ENCODE measurements at regions of chr10 and their contacts with region 1.

Region 1: DNA sequence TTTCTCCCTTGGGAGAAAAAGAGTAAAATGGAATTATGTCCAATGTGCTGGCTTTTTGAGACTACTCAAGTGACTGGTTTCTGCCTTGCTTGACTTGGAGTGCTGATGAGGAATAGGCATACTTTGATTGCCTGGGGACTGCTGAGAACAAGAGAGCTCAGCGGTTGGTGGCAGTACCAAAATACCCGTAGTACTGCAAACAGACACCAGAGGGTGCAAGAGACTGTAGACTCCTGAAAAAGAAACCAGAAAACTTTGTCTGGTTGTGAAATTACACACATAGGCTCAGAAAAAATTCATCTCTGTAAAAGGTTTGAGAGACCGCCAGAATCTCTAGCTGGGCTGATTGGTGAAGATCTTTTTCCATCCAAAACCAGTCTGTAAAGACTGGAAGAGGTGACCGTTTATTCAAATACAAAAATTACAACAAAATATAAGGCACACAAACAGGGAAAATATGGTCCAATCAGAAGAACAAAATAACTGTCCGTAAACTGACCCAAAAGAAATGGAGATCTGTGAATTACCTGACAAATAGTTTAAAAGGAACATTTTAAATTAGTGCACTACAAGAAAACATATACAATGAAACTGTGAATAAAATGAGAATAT is 18.5 kb downstream of the BICC1 start:
- DNase-seq: peak; percentile 81
- H3K4me3 Mint-ChIP-seq: no peak overlapping the region
- H3K27ac Mint-ChIP-seq: peak overlapping the region; percentile 87
- H3K4me1 Mint-ChIP-seq: peaks cover 24% of the 10 kb centered on the region
- H3K27me3 Mint-ChIP-seq: no peaks in the 10 kb centered on the region
- CTCF ChIP-seq: peak; percentile 84

Region 2: GRCh38 chr10:58173391-58173790 is 357.8 kb before region 1 on chr10:
- CTCF ChIA-PET with region 1: no interaction called
- POLR2A ChIA-PET with region 1: no interaction called
- intact Hi-C with region 1: no loop called
- DNase-seq: no peak
- H3K4me3 Mint-ChIP-seq: no peak overlapping the region
- H3K27ac Mint-ChIP-seq: no peak overlapping the region
- H3K4me1 Mint-ChIP-seq: no peaks in the 10 kb centered on the region
- H3K27me3 Mint-ChIP-seq: peaks cover 20% of the 10 kb centered on the region
- CTCF ChIP-seq: no peak

Region 3: GRCh38 chr10:58258977-58259692 is 272.1 kb before region 1 on chr10:
- CTCF ChIA-PET with region 1: no interaction called
- POLR2A ChIA-PET with region 1: no interaction called
- intact Hi-C with region 1: no loop called
- DNase-seq: no peak
- H3K4me3 Mint-ChIP-seq: no peak overlapping the region
- H3K27ac Mint-ChIP-seq: no peak overlapping the region
- H3K4me1 Mint-ChIP-seq: no peaks in the 10 kb centered on the region
- H3K27me3 Mint-ChIP-seq: no peaks in the 10 kb centered on the region
- CTCF ChIP-seq: peak; percentile 11

Region 4: GRCh38 chr10:58360391-58361004 is 170.7 kb before region 1 on chr10:
- CTCF ChIA-PET with region 1: no interaction called
- POLR2A ChIA-PET with region 1: no interaction called
- intact Hi-C with region 1: no loop called
- DNase-seq: peak; percentile 63
- H3K4me3 Mint-ChIP-seq: no peak overlapping the region
- H3K27ac Mint-ChIP-seq: peak overlapping the region; percentile 26
- H3K4me1 Mint-ChIP-seq: peaks cover 13% of the 10 kb centered on the region
- H3K27me3 Mint-ChIP-seq: no peaks in the 10 kb centered on the region
- CTCF ChIP-seq: no peak

Region 5: DNA sequence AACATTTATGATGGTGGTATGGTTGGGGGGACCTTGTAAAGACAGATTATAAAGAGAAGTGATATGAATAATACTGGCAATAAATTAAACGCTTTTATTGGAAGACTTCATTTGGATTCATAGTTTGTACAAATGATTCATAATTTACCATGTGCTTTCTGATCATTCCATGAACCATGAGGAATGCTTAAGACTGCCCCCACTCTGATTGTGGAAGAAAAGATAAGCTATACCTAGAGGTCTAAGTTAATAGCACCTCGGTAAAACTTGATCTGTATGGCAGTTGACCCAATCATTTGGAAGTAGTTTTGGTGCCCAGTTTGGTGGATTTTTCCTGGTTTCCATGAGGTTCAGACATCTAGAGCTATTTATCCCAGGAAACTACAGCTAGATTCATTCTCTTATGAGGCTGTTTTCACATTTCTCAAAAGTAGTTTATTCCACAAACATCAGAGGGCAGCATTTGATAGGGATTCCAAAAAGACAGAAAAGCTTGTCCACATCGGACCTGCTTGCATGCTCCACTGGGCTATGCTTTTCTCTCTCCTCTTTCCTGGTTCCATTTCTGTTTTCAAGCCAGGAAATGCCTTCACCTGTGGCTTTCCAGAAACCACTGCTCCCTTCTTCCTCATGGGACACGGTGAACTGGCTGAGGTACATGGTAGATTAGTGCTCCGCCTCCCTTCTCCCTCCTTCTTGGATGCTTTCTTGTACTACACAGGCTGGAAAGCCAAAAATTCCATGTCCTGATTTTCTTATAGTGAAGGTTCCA is 116.7 kb before region 1 on chr10:
- CTCF ChIA-PET with region 1: interaction called, 85 read pairs
- POLR2A ChIA-PET with region 1: interaction called, 9 read pairs
- intact Hi-C with region 1: loop called (anchors 1 kb)
- DNase-seq: peak; percentile 79
- H3K4me3 Mint-ChIP-seq: no peak overlapping the region
- H3K27ac Mint-ChIP-seq: no peak overlapping the region
- H3K4me1 Mint-ChIP-seq: peaks cover 16% of the 10 kb centered on the region
- H3K27me3 Mint-ChIP-seq: no peaks in the 10 kb centered on the region
- CTCF ChIP-seq: peak; percentile 67

Region 6: GRCh38 chr10:58513188-58514110 is 17.7 kb before region 1 on chr10:
- CTCF ChIA-PET with region 1: interaction called, 19 read pairs
- POLR2A ChIA-PET with region 1: interaction called, 10 read pairs
- intact Hi-C with region 1: no loop called
- DNase-seq: peak; percentile 73
- H3K4me3 Mint-ChIP-seq: peak overlapping the region; percentile 74
- H3K27ac Mint-ChIP-seq: peak overlapping the region; percentile 89
- H3K4me1 Mint-ChIP-seq: peaks cover 27% of the 10 kb centered on the region
- H3K27me3 Mint-ChIP-seq: no peaks in the 10 kb centered on the region
- CTCF ChIP-seq: no peak

Region 7: GRCh38 chr10:58588673-58589265 is 57.6 kb after region 1 on chr10:
- CTCF ChIA-PET with region 1: interaction called, 13 read pairs
- POLR2A ChIA-PET with region 1: no interaction called
- intact Hi-C with region 1: no loop called
- DNase-seq: peak; percentile 60
- H3K4me3 Mint-ChIP-seq: no peak overlapping the region
- H3K27ac Mint-ChIP-seq: peak overlapping the region; percentile 52
- H3K4me1 Mint-ChIP-seq: peaks cover 29% of the 10 kb centered on the region
- H3K27me3 Mint-ChIP-seq: no peaks in the 10 kb centered on the region
- CTCF ChIP-seq: no peak

Region 8: GRCh38 chr10:58608351-58608750 is 77.2 kb after region 1 on chr10:
- CTCF ChIA-PET with region 1: no interaction called
- POLR2A ChIA-PET with region 1: no interaction called
- intact Hi-C with region 1: no loop called
- DNase-seq: no peak
- H3K4me3 Mint-ChIP-seq: no peak overlapping the region
- H3K27ac Mint-ChIP-seq: peak overlapping the region; percentile 28
- H3K4me1 Mint-ChIP-seq: no peaks in the 10 kb centered on the region
- H3K27me3 Mint-ChIP-seq: no peaks in the 10 kb centered on the region
- CTCF ChIP-seq: no peak

Region 9: GRCh38 chr10:58755677-58756076 is 224.5 kb after region 1 on chr10:
- CTCF ChIA-PET with region 1: interaction called, 9 read pairs
- POLR2A ChIA-PET with region 1: no interaction called
- intact Hi-C with region 1: loop called (anchors 5 kb)
- DNase-seq: peak; percentile 83
- H3K4me3 Mint-ChIP-seq: peak overlapping the region; percentile 75
- H3K27ac Mint-ChIP-seq: peak overlapping the region; percentile 90
- H3K4me1 Mint-ChIP-seq: peaks cover 14% of the 10 kb centered on the region
- H3K27me3 Mint-ChIP-seq: no peaks in the 10 kb centered on the region
- CTCF ChIP-seq: no peak

Region 10: GRCh38 chr10:58952747-58953466 is 421.7 kb after region 1 on chr10:
- CTCF ChIA-PET with region 1: interaction called, 16 read pairs
- POLR2A ChIA-PET with region 1: no interaction called
- intact Hi-C with region 1: loop called (anchors 2 kb)
- DNase-seq: peak; percentile 59
- H3K4me3 Mint-ChIP-seq: no peak overlapping the region
- H3K27ac Mint-ChIP-seq: no peak overlapping the region
- H3K4me1 Mint-ChIP-seq: peaks cover 6% of the 10 kb centered on the region
- H3K27me3 Mint-ChIP-seq: peaks cover 9% of the 10 kb centered on the region
- CTCF ChIP-seq: peak; percentile 70

Region 11: DNA sequence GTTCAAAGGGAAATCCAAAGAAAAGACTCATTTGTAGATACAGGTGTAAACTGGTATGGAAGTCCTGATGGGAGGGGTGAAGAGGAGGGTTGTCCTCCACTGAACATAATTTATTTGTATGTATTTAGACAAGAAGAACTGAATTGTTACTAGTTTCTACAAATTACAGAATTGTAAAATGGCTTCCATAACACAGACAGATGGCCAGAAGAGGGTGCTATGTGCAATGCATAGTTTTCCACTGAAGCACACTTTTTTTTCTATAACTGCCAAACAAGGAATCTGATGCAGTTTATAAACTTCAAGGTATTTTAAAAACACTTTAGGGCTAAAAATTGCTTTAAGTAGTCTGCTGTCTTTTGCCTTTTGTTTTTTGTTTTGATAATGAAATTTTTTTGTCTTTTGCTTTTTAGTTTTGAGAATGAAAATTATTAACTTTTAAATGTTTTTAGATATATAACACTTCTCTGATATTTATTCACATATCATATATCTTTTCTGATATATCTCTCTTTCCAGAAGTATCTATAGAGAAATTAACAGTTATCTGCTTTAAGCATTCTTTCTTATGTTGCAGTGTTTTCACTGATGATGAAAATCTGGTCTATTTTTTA is 703.7 kb after region 1 on chr10:
- CTCF ChIA-PET with region 1: interaction called, 5 read pairs
- POLR2A ChIA-PET with region 1: interaction called, 5 read pairs
- intact Hi-C with region 1: loop called (anchors 5 kb)
- DNase-seq: peak; percentile 39
- H3K4me3 Mint-ChIP-seq: no peak overlapping the region
- H3K27ac Mint-ChIP-seq: no peak overlapping the region
- H3K4me1 Mint-ChIP-seq: no peaks in the 10 kb centered on the region
- H3K27me3 Mint-ChIP-seq: peaks cover 74% of the 10 kb centered on the region
- CTCF ChIP-seq: peak; percentile 42

Measured in MCF 10A (cell line).